Colonic mucosa (tissue), 4 donors: ENCODE measurements at regions of chr4 and their contacts with region 1.

Region 1: DNA sequence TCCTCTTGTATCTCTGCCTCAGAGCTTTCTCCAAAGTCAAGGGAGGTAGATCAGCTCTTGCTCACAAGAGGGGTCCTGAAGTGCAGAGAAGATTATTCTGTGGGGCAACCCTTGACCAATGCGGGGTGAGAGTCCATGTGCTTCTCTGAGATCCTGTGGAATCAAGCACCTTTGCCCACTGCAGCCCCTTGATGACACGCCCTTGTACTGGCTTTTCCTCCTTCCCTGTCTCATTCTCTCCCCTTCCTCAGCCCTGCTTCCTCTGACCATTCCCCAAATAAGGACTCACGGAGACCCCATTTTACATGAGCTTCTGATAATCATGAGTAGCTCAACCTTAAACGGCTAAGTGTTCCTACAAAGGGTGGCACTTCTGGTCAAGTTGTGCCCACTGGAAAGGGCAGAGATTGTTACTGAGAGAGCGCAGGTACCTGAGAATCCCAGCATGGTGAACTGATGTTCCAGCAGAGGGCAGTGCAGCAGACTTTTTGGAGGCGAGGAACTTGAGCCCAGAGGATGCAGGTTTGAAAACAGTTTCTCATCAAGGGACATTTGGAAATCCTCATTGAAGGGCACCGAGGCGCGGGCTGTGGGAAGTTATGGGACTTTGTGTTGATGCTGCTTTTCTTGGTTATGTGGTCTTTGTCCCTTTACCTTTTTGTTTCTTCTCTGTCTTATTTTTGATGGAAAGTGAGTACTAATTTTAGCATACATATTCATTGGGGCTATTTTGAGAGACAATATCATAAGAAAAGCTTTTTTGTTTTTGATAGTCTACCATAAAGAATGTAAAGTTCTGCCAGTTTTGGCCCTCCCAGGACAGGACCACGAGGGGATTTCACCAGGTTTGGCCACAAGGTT is 201.3 kb downstream of the RBM46 start:
- DNase-seq: peak; percentile 56
- H3K4me3 ChIP-seq: no peak overlapping the region
- H3K27ac ChIP-seq: no peak overlapping the region
- H3K4me1 ChIP-seq: no peaks in the 10 kb centered on the region
- H3K27me3 ChIP-seq: no peaks in the 10 kb centered on the region
- CTCF ChIP-seq: peak; percentile 40

Region 2: GRCh38 chr4:155353923-155354540 is 371.6 kb after region 1 on chr4:
- intact Hi-C with region 1: loop called (anchors 5 kb)
- DNase-seq: peak; percentile 61
- H3K4me3 ChIP-seq: no peak overlapping the region
- H3K27ac ChIP-seq: no peak overlapping the region
- H3K4me1 ChIP-seq: no peaks in the 10 kb centered on the region
- H3K27me3 ChIP-seq: no peaks in the 10 kb centered on the region
- CTCF ChIP-seq: peak; percentile 67